Vagina (tissue), 2 donors: ENCODE measurements at regions of chr5 and their contacts with region 1.

Region 1: DNA sequence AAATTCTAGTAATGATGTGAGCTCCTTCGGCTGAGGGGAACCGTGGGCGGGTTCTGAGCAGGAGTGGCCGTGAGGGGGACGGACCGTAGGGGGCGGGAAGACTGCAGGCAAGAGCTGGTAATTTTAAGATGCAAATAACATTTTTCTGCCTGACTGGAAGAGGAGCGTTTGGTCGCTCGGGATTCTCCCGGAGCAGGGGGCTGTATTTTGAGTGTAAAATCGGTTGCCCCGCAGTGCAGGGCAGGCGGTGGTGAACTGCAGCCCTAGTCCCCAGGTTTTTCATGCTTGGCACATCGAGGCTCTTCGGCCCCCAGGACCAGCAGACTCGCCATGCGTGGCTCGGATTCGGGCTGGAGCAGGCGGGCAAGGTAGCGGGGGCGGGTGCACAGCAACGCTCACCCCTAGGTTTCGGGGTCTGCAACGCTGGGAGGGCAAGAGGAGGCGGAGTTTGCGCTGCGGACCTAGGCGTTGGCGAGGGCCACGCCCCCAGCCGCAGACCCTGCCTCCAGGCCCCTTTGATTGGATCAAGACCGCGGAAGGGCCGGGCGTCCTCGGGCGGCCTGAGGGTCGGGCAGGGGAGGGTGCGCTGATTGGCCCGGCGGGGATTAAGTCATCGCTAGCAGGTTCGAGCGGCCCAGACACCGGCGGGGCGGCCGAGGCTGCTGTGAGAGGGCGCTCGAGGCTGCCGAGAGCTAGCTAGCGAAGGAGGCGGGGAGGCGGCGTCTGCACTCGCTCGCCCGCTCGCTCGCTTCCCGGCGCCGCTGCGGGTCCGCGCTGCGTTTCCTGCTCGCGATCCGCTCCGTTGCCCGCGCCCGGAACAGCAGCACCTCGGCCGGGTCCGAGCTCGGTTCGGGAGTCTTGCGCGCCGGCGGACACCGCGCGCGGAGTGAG is at the start of gene ARHGAP26:
- DNase-seq: peak in 1 of 2 donors; percentile 98
- H3K4me3 ChIP-seq: peak within 1 kb of the TSS; percentile 66 to 85
- H3K27ac ChIP-seq: peak within 1 kb of the TSS; percentile 80
- H3K4me1 ChIP-seq: peaks cover 25% of the 10 kb centered on the region
- H3K27me3 ChIP-seq: no peaks in the 10 kb centered on the region
- CTCF ChIP-seq: no peak
- POLR2A ChIP-seq: peak; percentile 100
- total RNA-seq, gene ARHGAP26: 42.5 TPM

Region 2: DNA sequence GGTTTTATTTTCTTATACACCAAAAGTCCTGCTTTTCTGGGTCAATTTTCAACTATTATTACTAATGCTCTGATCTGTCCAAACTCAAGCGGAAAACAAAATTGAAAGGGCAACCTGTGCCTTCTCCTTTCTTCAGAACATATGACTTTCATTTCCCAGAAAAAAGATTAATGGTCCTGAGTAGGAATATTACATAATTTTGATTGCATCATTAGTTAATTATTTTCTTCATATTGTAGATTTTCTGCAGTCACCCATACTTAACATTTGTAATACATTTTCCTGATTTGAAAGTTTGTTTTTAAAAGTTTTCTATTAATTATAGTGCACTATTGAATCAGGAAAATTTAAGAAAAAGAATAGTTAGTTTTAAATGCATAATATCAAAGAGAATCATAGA is 1594.1 kb before region 1 on chr5:
- intact Hi-C with region 1: loop called (anchors 5 kb)
- DNase-seq: no peak
- H3K4me3 ChIP-seq: no peak overlapping the region
- H3K27ac ChIP-seq: no peak overlapping the region
- H3K4me1 ChIP-seq: no peaks in the 10 kb centered on the region
- H3K27me3 ChIP-seq: no peaks in the 10 kb centered on the region
- CTCF ChIP-seq: no peak
- POLR2A ChIP-seq: no peak

Region 3: DNA sequence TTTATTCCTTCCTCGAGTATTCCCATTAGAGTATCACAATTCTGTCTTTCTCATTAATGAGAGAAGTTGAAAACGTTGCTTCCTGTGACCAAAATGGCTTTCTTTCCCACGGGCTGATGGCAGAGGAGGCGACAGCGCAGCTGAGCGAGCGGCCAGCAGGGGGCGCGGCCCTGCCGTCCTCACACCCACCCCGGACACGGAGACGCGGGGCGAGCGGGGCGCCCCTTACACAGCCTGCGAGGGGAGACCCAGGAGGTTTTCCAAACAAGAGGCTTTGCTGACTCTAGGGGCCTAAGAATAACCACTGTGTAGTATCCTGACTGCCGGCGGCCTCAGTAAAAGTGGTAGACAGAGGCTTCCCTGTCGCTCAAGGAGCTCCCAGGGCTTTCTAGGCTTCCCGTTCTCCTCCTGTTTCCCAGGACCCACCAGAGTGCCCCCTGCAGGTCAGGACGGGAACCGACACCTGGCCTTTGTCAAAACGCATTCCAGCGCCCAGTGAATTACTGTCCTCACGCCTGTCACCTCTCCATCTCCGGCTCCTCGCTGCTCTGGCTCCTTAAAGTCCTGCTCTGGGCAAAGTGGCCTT is 56.8 kb before region 1 on chr5:
- intact Hi-C with region 1: loop called (anchors 10 kb)
- DNase-seq: no peak
- H3K4me3 ChIP-seq: peak overlapping the region; percentile 45 to 47
- H3K27ac ChIP-seq: peak overlapping the region; percentile 76
- H3K4me1 ChIP-seq: no peaks in the 10 kb centered on the region
- H3K27me3 ChIP-seq: no peaks in the 10 kb centered on the region
- CTCF ChIP-seq: peak; percentile 71 to 99 (median 93)
- POLR2A ChIP-seq: no peak

Region 4: GRCh38 chr5:142878638-142879037 is 108.7 kb after region 1 on chr5:
- intact Hi-C with region 1: loop called (anchors 5 kb)
- DNase-seq: no peak
- H3K4me3 ChIP-seq: no peak overlapping the region
- H3K27ac ChIP-seq: no peak overlapping the region
- H3K4me1 ChIP-seq: peaks cover 15% of the 10 kb centered on the region
- H3K27me3 ChIP-seq: no peaks in the 10 kb centered on the region
- CTCF ChIP-seq: no peak
- POLR2A ChIP-seq: no peak